ENCODE measurements at regions of chr16 and their contacts with region 1.

Region 1: DNA sequence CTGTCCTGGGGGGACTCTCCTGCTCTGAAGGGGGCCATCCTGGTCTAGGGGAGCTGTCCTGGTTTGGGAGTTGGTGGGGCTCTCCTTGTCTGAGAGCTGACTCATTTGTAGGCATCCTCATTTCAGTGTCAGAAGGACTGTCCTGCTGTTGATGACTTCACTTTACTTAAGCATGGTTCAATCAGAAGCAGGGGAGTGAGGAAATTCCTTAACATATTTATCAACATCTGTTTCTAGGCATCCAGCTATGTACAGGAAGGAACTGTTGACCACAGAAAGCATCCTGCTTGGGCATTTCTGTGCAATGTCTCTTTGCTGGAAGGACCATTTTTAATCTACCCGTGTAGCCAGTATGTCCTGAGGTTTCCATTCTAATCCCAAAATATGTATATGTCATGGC is 502.7 kb upstream of the HSBP1 start:
- DNase-seq: peak; percentile 82
- H3K4me3 ChIP-seq: no peak overlapping the region
- H3K27ac ChIP-seq: peak overlapping the region; percentile 97
- H3K4me1 ChIP-seq: peaks cover 36% of the 10 kb centered on the region
- H3K27me3 ChIP-seq: no peaks in the 10 kb centered on the region
- CTCF ChIP-seq: no peak
- POLR2A ChIP-seq: no peak

Region 2: GRCh38 chr16:83247767-83248372 is 57.2 kb before region 1 on chr16:
- CTCF ChIA-PET with region 1: no interaction called
- POLR2A ChIA-PET with region 1: no interaction called
- dilution Hi-C with region 1: no loop called
- intact Hi-C with region 1: no loop called
- DNase-seq: no peak
- H3K4me3 ChIP-seq: no peak overlapping the region
- H3K27ac ChIP-seq: no peak overlapping the region
- H3K4me1 ChIP-seq: no peaks in the 10 kb centered on the region
- H3K27me3 ChIP-seq: no peaks in the 10 kb centered on the region
- CTCF ChIP-seq: no peak
- POLR2A ChIP-seq: no peak

Region 3: GRCh38 chr16:83336630-83337029 is 31.5 kb after region 1 on chr16:
- CTCF ChIA-PET with region 1: interaction called, 6 read pairs
- POLR2A ChIA-PET with region 1: no interaction called
- dilution Hi-C with region 1: no loop called
- intact Hi-C with region 1: loop called (anchors 1 kb)
- DNase-seq: peak; percentile 91
- H3K4me3 ChIP-seq: no peak overlapping the region
- H3K27ac ChIP-seq: peak overlapping the region; percentile 47
- H3K4me1 ChIP-seq: peaks cover 37% of the 10 kb centered on the region
- H3K27me3 ChIP-seq: no peaks in the 10 kb centered on the region
- CTCF ChIP-seq: no peak
- POLR2A ChIP-seq: no peak

Region 4: GRCh38 chr16:83356266-83356665 is 51.2 kb after region 1 on chr16:
- CTCF ChIA-PET with region 1: interaction called, 7 read pairs
- POLR2A ChIA-PET with region 1: no interaction called
- dilution Hi-C with region 1: no loop called
- intact Hi-C with region 1: loop called (anchors 5 kb)
- DNase-seq: peak; percentile 70
- H3K4me3 ChIP-seq: no peak overlapping the region
- H3K27ac ChIP-seq: no peak overlapping the region
- H3K4me1 ChIP-seq: no peaks in the 10 kb centered on the region
- H3K27me3 ChIP-seq: no peaks in the 10 kb centered on the region
- CTCF ChIP-seq: peak; percentile 72 to 74
- POLR2A ChIP-seq: no peak

Region 5: DNA sequence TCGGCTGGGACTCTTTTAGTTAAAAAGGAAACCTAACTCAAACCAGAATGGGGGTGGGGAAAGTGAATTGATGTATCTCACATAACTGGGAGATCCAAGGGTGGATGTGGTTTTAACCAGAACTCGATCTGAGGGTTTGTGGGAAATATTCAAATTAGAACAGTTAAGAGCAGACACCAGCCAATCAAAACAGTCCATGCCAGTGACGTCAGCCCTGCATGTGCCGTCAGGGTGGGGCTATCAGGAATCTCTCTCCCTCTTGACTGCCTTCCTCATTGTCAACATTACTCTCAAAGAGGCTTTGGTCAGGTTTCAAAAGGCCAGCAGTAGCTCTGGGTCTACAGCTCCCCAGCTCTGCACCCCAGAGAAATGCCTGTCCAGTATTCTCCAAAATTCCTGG is 408.5 kb after region 1 on chr16:
- CTCF ChIA-PET with region 1: no interaction called
- POLR2A ChIA-PET with region 1: no interaction called
- dilution Hi-C with region 1: no loop called
- intact Hi-C with region 1: no loop called
- DNase-seq: no peak
- H3K4me3 ChIP-seq: no peak overlapping the region
- H3K27ac ChIP-seq: no peak overlapping the region
- H3K4me1 ChIP-seq: peaks cover 8% of the 10 kb centered on the region
- H3K27me3 ChIP-seq: no peaks in the 10 kb centered on the region
- CTCF ChIP-seq: no peak
- POLR2A ChIP-seq: no peak

Measured in endothelial cell of umbilical vein (primary cell).